ENCODE measurements at regions of chr17 and their contacts with region 1.

Region 1: GRCh38 chr17:40598663-40599467 is 33.6 kb upstream of the CCR7 start:
- DNase-seq: peak; percentile 97
- ATAC-seq: peak; percentile 59
- H3K4me3 ChIP-seq: peak overlapping the region; percentile 38; the same call in 1 of the 2 replicates
- H3K27ac ChIP-seq: peak overlapping the region; percentile 91
- H3K4me1 ChIP-seq: peaks cover 73% of the 10 kb centered on the region
- H3K27me3 ChIP-seq: no peaks in the 10 kb centered on the region
- CTCF ChIP-seq: no peak
- EP300 ChIP-seq: peak; percentile 98
- POLR2A ChIP-seq: no peak
- RAD21 ChIP-seq: peak; percentile 30

Region 2: DNA sequence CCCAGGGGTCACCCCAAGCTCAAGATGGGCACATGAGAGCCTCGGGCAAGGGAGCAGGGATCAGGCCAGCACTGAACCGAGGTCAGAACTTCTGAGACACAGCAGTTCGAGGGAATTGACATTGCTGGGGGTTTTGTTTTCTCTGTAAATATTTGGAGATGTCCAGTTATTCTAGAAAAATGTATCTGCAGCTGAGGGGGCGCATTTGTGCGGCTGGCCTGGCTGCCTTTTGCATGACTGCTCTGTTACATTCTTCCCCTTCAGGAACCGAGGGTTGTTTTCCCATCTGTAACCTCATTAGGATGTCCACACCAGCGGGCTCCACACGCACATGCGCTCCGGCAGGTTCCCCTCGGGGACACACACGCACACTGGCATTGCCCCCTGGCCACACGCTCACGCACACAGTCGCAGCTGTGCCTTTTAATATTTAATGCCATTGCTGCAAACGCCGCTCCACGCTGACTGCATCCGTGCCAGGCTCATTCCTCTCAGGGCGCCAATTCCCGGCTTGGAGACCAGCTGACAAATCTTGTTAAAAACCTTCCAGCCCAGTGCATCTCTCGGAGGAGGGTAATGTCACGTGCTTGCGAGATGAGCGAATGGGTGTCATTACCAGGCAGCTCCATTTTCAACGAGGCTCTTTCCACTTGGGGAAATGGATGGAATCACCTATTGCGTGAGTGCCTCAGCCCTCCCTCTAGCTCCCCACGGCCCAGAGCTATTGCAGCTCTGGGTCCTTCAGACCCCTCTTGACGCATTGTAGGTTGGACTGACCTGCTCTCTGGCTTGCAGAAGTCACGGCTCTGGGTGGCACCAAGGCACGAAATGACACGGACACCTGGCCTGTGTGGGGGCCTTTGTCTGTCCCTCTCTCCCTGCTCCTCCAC is 46.7 kb before region 1 on chr17:
- CTCF ChIA-PET with region 1: interaction called, 5 read pairs
- POLR2A ChIA-PET with region 1: interaction called, 81 read pairs
- RAD21 ChIA-PET with region 1: interaction called, 18 read pairs
- SMC1A ChIA-PET with region 1: interaction called, 15 read pairs
- in situ Hi-C with region 1: no loop called
- intact Hi-C with region 1: no loop called
- DNase-seq: no peak
- ATAC-seq: peak; percentile 5
- H3K4me3 ChIP-seq: no peak overlapping the region
- H3K27ac ChIP-seq: no peak overlapping the region
- H3K4me1 ChIP-seq: peaks cover 45% of the 10 kb centered on the region
- H3K27me3 ChIP-seq: no peaks in the 10 kb centered on the region
- CTCF ChIP-seq: no peak
- EP300 ChIP-seq: no peak
- POLR2A ChIP-seq: peak; percentile 82
- RAD21 ChIP-seq: no peak

Region 3: DNA sequence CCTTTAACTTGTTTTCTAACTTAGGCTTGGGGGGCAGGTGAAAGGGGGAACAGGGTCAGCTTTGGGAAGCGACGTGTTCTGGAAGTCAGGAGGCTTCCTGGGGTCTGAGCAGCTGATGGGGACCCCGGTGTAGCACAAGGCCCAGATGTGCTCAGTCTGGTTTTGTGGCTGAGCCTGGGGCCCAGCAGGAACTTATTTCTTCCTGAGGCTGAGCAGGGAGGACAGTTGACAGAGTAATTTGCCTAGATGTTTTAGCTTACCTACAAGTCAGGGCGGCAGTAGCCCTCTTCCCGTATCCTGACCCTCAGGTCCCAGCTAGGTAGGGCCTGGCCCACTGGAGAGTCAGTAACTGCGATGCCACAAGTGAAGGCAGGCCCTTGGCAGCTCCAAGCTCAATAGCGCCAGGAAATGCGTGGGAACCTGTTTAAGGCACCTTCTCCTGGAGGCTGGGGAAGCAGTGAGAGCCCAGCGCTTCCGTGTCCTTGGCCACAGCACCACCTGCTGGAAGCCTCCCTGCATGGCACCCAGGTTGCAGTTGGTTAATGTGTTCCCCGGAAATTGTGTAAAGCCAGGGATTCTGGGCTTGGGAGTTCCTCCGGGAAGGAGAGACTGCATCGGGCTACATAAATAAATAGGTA is 38.8 kb before region 1 on chr17:
- CTCF ChIA-PET with region 1: interaction called, 43 read pairs
- POLR2A ChIA-PET with region 1: interaction called, 81 read pairs
- RAD21 ChIA-PET with region 1: interaction called, 75 read pairs
- SMC1A ChIA-PET with region 1: interaction called, 63 read pairs
- in situ Hi-C with region 1: loop called (anchors 5 kb)
- intact Hi-C with region 1: loop called (anchors 1 kb)
- DNase-seq: peak; percentile 72
- ATAC-seq: peak; percentile 5
- H3K4me3 ChIP-seq: peak overlapping the region; percentile 70
- H3K27ac ChIP-seq: peak overlapping the region; percentile 98
- H3K4me1 ChIP-seq: peaks cover 33% of the 10 kb centered on the region
- H3K27me3 ChIP-seq: no peaks in the 10 kb centered on the region
- CTCF ChIP-seq: peak; percentile 91 to 97 (median 94)
- EP300 ChIP-seq: no peak
- POLR2A ChIP-seq: no peak; the same call in 1 of the 2 replicates
- RAD21 ChIP-seq: peak; percentile 90

Region 4: GRCh38 chr17:40564883-40565768 is 33.7 kb before region 1 on chr17 and contains the start of gene CCR7:
- CTCF ChIA-PET with region 1: interaction called, 43 read pairs
- POLR2A ChIA-PET with region 1: interaction called, 81 read pairs
- RAD21 ChIA-PET with region 1: interaction called, 75 read pairs
- SMC1A ChIA-PET with region 1: interaction called, 63 read pairs
- in situ Hi-C with region 1: loop called (anchors 5 kb)
- intact Hi-C with region 1: loop called (anchors 1 kb)
- DNase-seq: no peak
- ATAC-seq: peak; percentile 44
- H3K4me3 ChIP-seq: peak within 1 kb of the TSS; percentile 93
- H3K27ac ChIP-seq: peak within 1 kb of the TSS; percentile 98
- H3K4me1 ChIP-seq: peaks cover 25% of the 10 kb centered on the region
- H3K27me3 ChIP-seq: no peaks in the 10 kb centered on the region; a peak in 1 of 4 replicates
- CTCF ChIP-seq: peak in 2 of 3 experiments; percentile 16 to 24; a peak in 2 of 6 replicates
- EP300 ChIP-seq: peak; percentile 12 to 51; a peak in 1 of 4 replicates
- POLR2A ChIP-seq: peak; percentile 96
- RAD21 ChIP-seq: 0 out of 2 replicates have a peak, but pooled peaks have one; percentile 7
- polyA plus RNA-seq, gene CCR7: 235 to 294 TPM

Region 5: DNA sequence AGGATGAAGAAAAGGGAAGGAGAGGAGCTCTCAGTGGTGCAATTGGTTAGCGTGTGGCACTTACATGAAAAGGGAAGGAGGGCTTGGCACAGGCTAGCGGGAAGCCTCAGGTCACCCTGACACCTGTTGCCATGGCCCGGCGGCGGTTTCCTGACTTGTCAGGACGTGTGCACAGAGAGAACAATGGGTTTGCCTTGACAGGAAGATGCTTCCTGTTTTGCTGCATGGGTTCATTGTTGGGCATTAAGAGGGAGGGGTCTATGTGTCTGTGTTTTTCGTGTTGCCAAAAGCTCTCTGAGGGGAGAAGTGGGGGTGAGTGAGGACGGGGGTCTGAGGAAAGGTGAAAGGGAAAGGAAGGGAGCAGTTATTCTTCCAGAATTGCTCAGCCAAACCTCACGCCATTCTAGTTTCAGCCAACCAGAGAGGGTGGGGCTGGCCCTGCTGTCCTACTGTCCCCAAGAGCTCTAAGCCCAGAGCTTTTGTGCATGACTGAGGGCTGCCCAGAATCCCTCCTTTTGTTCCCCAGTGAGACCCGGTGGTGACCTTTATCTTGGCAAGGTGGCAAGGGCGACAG is 16.4 kb before region 1 on chr17:
- CTCF ChIA-PET with region 1: interaction called, 19 read pairs
- POLR2A ChIA-PET with region 1: interaction called, 26 read pairs
- RAD21 ChIA-PET with region 1: interaction called, 37 read pairs
- SMC1A ChIA-PET with region 1: interaction called, 45 read pairs
- in situ Hi-C with region 1: no loop called
- intact Hi-C with region 1: loop called (anchors 1 kb)
- DNase-seq: peak; percentile 99
- ATAC-seq: peak; percentile 87
- H3K4me3 ChIP-seq: no peak overlapping the region
- H3K27ac ChIP-seq: no peak overlapping the region
- H3K4me1 ChIP-seq: peaks cover 28% of the 10 kb centered on the region
- H3K27me3 ChIP-seq: peaks cover 0 to 4% of the 10 kb centered on the region in 2 experiments; a peak in 1 of 4 replicates
- CTCF ChIP-seq: no peak
- EP300 ChIP-seq: peak; percentile 59 to 60; a peak in 2 of 4 replicates
- POLR2A ChIP-seq: no peak
- RAD21 ChIP-seq: 0 out of 2 replicates have a peak, but pooled peaks have one; percentile 4

Region 6: GRCh38 chr17:40588552-40588951 is 10.3 kb before region 1 on chr17:
- CTCF ChIA-PET with region 1: interaction called, 3 read pairs
- POLR2A ChIA-PET with region 1: interaction called, 4 read pairs
- RAD21 ChIA-PET with region 1: interaction called, 8 read pairs
- SMC1A ChIA-PET with region 1: interaction called, 21 read pairs
- in situ Hi-C with region 1: no loop called
- intact Hi-C with region 1: no loop called
- DNase-seq: no peak
- ATAC-seq: no peak
- H3K4me3 ChIP-seq: no peak overlapping the region
- H3K27ac ChIP-seq: no peak overlapping the region
- H3K4me1 ChIP-seq: no peaks in the 10 kb centered on the region
- H3K27me3 ChIP-seq: peaks cover 0 to 4% of the 10 kb centered on the region in 2 experiments; a peak in 1 of 4 replicates
- CTCF ChIP-seq: no peak
- EP300 ChIP-seq: no peak
- POLR2A ChIP-seq: no peak
- RAD21 ChIP-seq: no peak

Region 7: GRCh38 chr17:40664582-40665333 is 65.9 kb after region 1 on chr17 and contains the start of gene KRT222:
- CTCF ChIA-PET with region 1: no interaction called
- POLR2A ChIA-PET with region 1: no interaction called
- RAD21 ChIA-PET with region 1: no interaction called
- SMC1A ChIA-PET with region 1: no interaction called
- in situ Hi-C with region 1: no loop called
- intact Hi-C with region 1: no loop called
- DNase-seq: no peak
- ATAC-seq: peak; percentile 62
- H3K4me3 ChIP-seq: no peak within 1 kb of the TSS
- H3K27ac ChIP-seq: no peak within 1 kb of the TSS
- H3K4me1 ChIP-seq: no peaks in the 10 kb centered on the region
- H3K27me3 ChIP-seq: peaks cover 2 to 24% of the 10 kb centered on the region in 2 experiments; a peak in 2 of 4 replicates
- CTCF ChIP-seq: no peak
- EP300 ChIP-seq: no peak
- POLR2A ChIP-seq: no peak
- RAD21 ChIP-seq: no peak
- polyA plus RNA-seq, gene KRT222: 0.74 to 0.95 TPM